ENCODE measurements at regions of chr17 and their contacts with region 1.

Region 1: DNA sequence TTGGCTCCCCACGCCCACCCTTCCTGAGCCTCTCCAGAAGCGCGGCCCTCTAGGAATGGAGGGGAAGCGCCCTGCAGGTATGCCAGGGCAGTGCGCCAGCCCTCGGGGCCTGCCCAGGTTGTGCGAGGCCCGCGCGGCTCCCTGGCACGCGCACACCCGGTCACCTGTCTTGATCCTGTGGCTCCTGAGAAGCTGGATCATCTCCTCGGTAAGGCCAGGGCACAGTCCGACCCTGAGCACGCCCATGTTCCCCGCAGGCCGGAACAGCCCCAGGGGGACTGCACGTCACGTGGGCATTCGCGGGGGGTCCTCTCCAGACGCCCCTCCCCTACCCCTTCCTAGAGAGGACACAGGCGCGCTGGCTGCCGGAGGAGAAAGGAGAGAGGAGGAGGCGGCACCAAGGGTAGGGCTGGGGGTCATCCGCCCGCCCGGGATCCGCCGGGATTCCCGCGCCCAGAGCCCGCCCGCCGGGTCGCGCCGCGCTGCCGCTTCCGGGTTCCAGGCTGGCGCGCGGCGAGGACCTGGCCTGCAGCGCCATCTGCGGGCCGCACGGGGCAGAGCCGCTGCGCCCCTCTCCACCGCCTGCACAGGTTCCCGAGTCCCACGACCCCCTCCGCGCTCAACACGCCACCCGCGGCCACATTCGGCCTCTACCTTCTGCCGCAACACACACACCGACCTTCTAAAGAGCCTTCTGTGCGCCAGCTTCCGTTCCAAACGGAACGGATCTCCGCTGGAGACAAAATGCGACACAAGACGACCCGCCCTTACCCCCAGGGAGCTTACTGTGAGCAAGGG is at the start of gene RAD51D:
- DNase-seq: peak; percentile 94
- CTCF ChIP-seq: peak; percentile 90

Region 2: GRCh38 chr17:34420254-34420766 is 699.3 kb before region 1 on chr17:
- CTCF ChIA-PET with region 1: interaction called, 28 read pairs
- POLR2A ChIA-PET with region 1: no interaction called
- DNase-seq: peak; percentile 71
- CTCF ChIP-seq: peak; percentile 89

Region 3: GRCh38 chr17:34542700-34543336 is 576.7 kb before region 1 on chr17:
- CTCF ChIA-PET with region 1: interaction called, 26 read pairs
- POLR2A ChIA-PET with region 1: no interaction called
- DNase-seq: peak; percentile 42
- CTCF ChIP-seq: peak; percentile 70

Region 4: DNA sequence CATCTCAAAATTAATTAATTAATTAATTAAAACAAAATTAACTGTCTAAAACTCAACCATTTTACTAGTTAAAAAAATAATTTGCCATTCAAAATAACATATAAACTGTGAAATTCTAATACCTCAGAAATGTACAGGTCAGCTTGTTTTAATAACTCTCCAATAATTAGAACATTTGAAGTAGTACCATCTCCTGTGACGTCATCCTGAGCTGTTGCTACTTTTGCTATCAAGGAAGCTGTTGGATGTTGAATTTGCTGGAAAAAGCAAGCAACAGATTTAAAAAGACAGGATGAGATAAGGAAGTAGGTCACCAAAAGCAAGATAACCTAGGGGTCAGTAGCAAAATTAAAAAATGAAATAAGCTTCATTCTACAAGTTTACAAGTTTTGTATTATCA is 161.1 kb before region 1 on chr17:
- CTCF ChIA-PET with region 1: no interaction called
- POLR2A ChIA-PET with region 1: no interaction called
- DNase-seq: no peak
- CTCF ChIP-seq: no peak

Region 5: DNA sequence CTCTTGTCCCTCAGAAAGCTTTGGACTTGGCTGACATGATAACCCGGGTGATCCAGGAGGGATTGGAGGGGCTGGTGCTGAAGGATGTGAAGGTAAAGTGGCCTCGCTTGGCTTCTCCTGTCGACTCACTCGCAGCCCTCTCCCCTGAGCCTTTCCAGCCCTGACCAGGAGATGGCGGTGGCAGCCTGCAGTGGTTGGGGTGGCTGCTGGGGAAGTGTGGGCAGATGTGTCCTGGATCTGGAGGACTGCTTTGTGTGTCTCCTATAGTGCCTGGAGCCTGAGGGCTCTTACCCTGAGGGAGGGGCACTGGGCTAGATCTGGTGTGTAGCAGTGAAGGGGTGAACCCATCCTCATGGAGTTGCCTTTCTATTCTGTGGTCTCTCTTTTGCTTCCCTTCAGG is 121.4 kb before region 1 on chr17:
- CTCF ChIA-PET with region 1: interaction called, 155 read pairs
- POLR2A ChIA-PET with region 1: no interaction called
- DNase-seq: peak; percentile 90
- CTCF ChIP-seq: peak; percentile 93

Region 6: DNA sequence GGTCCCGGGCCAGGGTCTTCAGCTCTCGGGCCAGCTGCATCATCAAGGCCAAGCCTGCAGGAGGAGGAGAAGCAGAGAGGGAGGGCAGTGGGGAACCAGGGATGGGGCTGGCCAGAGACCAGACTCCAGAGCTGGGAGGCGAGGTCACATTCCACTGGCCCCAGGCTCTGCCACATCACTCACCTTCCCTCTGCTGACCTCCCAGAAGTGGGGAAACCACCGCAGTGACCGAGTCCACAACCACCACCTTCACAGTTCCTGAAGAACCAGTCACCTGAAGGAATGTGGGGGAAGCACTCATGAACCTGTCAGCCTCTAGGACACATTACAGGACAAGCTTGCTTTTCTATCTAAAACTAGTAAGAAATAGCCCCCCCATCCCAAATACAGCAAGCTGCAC is 16.3 kb before region 1 on chr17:
- CTCF ChIA-PET with region 1: interaction called, 21 read pairs
- POLR2A ChIA-PET with region 1: no interaction called
- DNase-seq: no peak
- CTCF ChIP-seq: no peak

Region 7: DNA sequence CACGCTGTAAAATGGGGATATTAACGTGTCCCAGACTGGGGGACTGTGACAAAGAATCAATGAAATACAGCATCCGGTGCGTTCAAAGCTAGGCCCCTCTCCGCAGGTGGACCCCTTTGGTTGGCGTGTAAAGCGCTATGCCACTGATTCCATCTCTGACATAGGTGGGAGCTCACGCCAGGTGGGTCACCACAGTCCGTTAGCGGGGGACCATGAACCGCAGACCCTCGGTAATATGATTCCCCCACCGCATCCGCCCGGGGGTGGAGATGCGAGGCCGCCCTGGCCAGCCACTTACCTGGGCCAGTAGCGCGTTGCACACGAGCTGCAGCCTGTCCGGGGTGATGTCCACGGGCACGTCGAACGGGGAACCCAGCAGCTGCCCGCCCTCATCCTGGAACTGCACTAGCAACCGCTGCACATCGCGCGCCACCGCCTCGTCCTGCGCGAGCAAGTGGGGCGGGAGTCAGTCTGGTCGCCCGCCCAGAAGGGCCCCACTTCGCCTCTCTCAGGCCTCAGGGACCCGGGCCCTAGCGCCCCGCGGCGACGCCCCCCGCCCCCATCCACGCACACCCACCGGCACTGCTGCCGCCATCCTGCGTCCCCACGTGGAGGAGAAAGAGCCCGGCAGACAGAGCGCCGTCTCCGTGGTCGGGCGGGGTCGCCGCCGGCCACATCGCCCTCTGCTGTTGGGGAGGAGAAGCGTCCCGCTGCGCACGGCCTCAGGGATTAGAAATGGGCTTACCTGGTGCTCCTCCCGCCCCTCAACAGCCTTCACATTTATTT is 22.3 kb after region 1 on chr17 and contains the start of gene NLE1:
- CTCF ChIA-PET with region 1: interaction called, 17 read pairs
- POLR2A ChIA-PET with region 1: no interaction called
- DNase-seq: peak; percentile 94
- CTCF ChIP-seq: peak; percentile 98

Measured in GM10248 (cell line).